IMR-90 (cell line): ENCODE measurements at regions of chr1 and their contacts with region 1.

Region 1: GRCh38 chr1:54095546-54096226 is 42.3 kb downstream of the TCEANC2 start:
- DNase-seq: no peak
- ATAC-seq: no peak
- H3K4me3 ChIP-seq: no peak overlapping the region
- H3K27ac ChIP-seq: no peak overlapping the region
- H3K4me1 ChIP-seq: no peaks in the 10 kb centered on the region
- H3K27me3 ChIP-seq: no peaks in the 10 kb centered on the region
- CTCF ChIP-seq: no peak
- POLR2A ChIP-seq: no peak
- RAD21 ChIP-seq: no peak

Region 2: GRCh38 chr1:54151013-54151412 is 55.3 kb after region 1 on chr1:
- CTCF ChIA-PET with region 1: no interaction called
- POLR2A ChIA-PET with region 1: no interaction called
- dilution Hi-C with region 1: no loop called
- in situ Hi-C with region 1: no loop called
- intact Hi-C with region 1: loop called (anchors 2 kb)
- DNase-seq: no peak
- ATAC-seq: no peak
- H3K4me3 ChIP-seq: no peak overlapping the region
- H3K27ac ChIP-seq: no peak overlapping the region
- H3K4me1 ChIP-seq: peaks cover 6% of the 10 kb centered on the region
- H3K27me3 ChIP-seq: peaks cover 2% of the 10 kb centered on the region; the same call in 1 of the 2 replicates
- CTCF ChIP-seq: no peak
- POLR2A ChIP-seq: no peak
- RAD21 ChIP-seq: no peak